ENCODE measurements at regions of chr5 and their contacts with region 1.

Region 1: DNA sequence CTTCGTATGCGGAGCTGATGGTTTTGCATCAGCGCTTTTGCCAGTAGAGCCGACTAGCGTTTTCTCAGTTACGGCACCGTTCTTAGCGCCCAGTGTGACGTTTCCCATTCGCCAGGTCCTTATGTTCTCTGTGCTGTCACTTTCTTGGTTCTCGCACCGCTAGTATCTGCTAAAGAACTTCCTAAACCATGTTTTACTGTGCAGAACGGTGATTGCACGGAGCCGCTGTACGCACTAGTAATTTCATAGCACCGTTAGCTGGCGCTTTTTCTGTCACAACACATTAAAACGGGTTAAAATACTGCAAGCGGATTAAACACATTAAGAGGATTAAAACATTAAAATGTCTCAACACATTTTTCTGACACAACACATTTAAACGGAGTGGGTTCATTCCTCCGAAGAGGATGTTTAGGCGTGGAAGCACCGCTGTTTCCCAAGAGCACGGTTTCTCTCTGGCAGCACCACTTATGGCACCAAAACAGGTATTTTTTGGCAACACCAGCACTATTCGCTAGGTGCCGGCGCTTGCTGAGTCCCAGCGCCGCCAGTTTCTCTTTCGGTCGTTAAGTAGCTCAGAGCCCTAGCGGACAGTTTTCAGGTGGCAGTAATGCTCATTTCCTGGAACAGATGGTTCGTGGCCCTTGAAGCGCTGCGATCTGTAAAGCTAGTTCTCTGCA is 20.4 kb downstream of the ANXA2R start:
- DNase-seq: peak; percentile 94
- ATAC-seq: peak; percentile 76
- H3K4me3 Mint-ChIP-seq: peak overlapping the region; percentile 96
- H3K27ac Mint-ChIP-seq: peak overlapping the region; percentile 100
- H3K4me1 Mint-ChIP-seq: peaks cover 33% of the 10 kb centered on the region
- H3K27me3 Mint-ChIP-seq: no peaks in the 10 kb centered on the region

Region 2: GRCh38 chr5:42950440-42951292 is 69.1 kb before region 1 on chr5:
- CTCF ChIA-PET with region 1: interaction called, 23 read pairs
- DNase-seq: peak; percentile 85
- ATAC-seq: peak; percentile 60
- H3K4me3 Mint-ChIP-seq: peak overlapping the region; percentile 83
- H3K27ac Mint-ChIP-seq: peak overlapping the region; percentile 99
- H3K4me1 Mint-ChIP-seq: peaks cover 33% of the 10 kb centered on the region
- H3K27me3 Mint-ChIP-seq: no peaks in the 10 kb centered on the region

Region 3: GRCh38 chr5:43008369-43009153 is 11.2 kb before region 1 on chr5:
- CTCF ChIA-PET with region 1: interaction called, 40 read pairs
- DNase-seq: peak; percentile 95
- ATAC-seq: peak; percentile 65
- H3K4me3 Mint-ChIP-seq: peak overlapping the region; percentile 90
- H3K27ac Mint-ChIP-seq: peak overlapping the region; percentile 97
- H3K4me1 Mint-ChIP-seq: peaks cover 37% of the 10 kb centered on the region
- H3K27me3 Mint-ChIP-seq: peaks cover 2% of the 10 kb centered on the region

Region 4: GRCh38 chr5:43049236-43049635 is 29.5 kb after region 1 on chr5:
- CTCF ChIA-PET with region 1: no interaction called
- DNase-seq: no peak
- ATAC-seq: no peak
- H3K4me3 Mint-ChIP-seq: no peak overlapping the region
- H3K27ac Mint-ChIP-seq: no peak overlapping the region
- H3K4me1 Mint-ChIP-seq: peaks cover 30% of the 10 kb centered on the region
- H3K27me3 Mint-ChIP-seq: no peaks in the 10 kb centered on the region

Region 5: DNA sequence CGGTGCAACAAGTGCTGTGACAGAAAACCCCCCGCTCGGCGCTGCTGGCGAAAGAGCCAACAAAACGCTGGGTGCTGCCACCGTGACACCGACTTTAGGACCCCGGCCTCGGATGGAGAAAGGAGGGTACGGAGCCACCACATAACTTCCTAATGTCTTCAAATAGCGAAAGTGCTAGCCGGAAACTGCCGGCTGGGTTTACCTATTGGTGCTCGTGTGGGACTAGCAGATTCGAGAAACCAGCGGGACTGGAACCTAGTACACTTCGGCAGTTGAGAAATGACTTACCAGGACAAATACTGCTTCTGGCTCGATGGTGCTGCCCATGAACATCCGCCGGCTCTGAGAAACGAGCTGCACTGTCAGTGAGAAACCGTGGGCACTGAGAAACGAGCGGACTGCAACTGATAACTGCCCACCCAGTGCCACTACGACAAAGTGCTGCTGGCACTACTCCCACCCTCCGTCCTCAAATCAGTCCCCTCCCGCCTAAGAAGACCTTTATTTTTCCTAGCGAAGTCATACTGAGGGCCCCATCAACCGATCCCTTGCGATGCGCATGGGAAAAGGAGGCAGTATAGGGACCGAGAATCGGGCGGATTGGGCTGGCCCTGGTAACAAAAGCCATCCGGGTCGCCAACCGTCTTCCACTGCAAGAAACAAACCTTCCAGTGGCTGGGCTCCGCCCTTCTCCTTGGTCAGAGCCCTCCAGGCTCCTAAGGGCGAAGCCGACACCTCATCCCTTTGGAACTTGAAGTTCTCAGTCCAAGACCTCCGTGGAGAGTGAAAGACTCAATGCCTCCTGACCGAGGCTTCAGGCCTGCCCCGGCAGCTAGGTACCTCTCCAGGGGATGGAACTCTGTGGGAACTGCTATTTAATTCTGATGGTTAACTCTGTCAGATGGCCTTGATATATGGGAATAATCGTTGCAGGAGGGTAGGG is 47.3 kb after region 1 on chr5:
- CTCF ChIA-PET with region 1: interaction called, 15 read pairs
- DNase-seq: peak; percentile 93
- ATAC-seq: peak; percentile 63
- H3K4me3 Mint-ChIP-seq: peak overlapping the region; percentile 99
- H3K27ac Mint-ChIP-seq: peak overlapping the region; percentile 97
- H3K4me1 Mint-ChIP-seq: peaks cover 41% of the 10 kb centered on the region
- H3K27me3 Mint-ChIP-seq: no peaks in the 10 kb centered on the region

Region 6: GRCh38 chr5:43078986-43079355 is 59.2 kb after region 1 on chr5:
- CTCF ChIA-PET with region 1: no interaction called
- DNase-seq: no peak
- ATAC-seq: no peak
- H3K4me3 Mint-ChIP-seq: no peak overlapping the region
- H3K27ac Mint-ChIP-seq: no peak overlapping the region
- H3K4me1 Mint-ChIP-seq: peaks cover 16% of the 10 kb centered on the region
- H3K27me3 Mint-ChIP-seq: no peaks in the 10 kb centered on the region

Measured in activated CD8-positive, alpha-beta memory T cell treated with anti-CD3 and anti-CD28 coated beads, Interleukin-2, amount 10 ng/mL, durations not matched to agents 7 days and 5 days (primary cell).